Endothelial cell of umbilical vein (primary cell): ENCODE measurements at regions of chr15 and their contacts with region 1.

Region 1: DNA sequence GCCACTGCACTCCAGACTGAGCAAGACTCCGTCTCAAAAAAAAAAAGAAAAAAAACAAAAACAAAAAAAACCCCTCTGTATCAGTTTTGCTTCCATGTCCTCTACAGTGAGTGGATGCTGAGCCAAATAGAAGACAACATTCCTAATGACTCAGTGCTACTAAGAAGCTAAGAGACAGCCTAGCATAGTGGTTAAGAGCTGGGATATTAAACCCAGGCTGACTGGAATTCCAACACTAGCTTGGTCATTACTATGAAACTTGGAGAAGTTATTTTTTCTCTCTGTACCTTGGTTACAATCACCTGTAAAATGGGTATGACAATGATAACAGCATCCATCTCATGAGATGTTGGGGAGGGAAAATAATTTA is 60.9 kb upstream of the PYGO1 start:
- DNase-seq: no peak
- H3K4me3 ChIP-seq: no peak overlapping the region
- H3K27ac ChIP-seq: no peak overlapping the region
- H3K4me1 ChIP-seq: no peaks in the 10 kb centered on the region
- H3K27me3 ChIP-seq: no peaks in the 10 kb centered on the region
- CTCF ChIP-seq: no peak
- POLR2A ChIP-seq: no peak

Region 2: DNA sequence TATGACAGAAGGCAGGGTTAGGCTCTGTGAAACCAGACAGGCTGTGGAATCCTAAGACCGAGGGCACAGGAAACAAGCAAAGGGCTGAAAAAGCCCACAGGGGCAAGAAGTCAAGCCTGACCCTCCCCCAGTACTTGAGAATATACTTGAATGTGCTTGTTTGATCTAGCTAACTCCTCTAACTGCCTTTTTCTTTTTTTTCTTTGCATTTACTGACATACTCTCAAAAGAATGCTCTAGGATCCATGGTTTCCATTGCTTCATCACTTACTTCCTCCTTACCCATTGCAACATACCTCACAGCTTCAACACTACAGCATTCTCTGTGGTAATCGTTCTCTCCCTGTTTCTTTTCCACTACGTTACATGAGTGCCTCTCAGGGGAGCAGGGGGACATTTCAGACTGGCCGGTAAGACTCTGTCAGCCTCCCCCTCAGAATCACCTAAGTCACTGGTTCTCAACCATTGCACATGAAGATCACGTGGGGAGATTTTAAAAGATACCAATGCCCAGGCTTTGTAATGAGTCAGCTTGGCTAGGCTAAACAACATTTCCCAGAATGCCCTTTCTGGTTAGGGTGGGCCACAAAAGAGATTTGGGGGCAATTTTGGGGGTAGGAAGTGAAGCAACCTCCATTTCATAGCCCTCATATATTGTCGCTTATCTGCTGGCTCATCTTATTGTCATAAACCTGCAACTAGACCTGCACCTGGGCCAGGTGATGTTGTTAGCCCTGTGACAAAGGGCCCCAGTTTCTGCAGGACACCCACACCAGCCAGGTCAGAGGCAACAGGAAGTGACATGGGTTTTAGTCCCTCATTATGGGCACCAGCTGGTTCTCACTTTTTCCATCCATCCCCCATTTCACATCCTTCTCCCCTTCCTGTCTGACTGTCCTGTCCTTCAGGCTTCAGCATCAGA is 427.7 kb before region 1 on chr15:
- CTCF ChIA-PET with region 1: no interaction called
- POLR2A ChIA-PET with region 1: no interaction called
- dilution Hi-C with region 1: no loop called
- intact Hi-C with region 1: loop called (anchors 5 kb)
- DNase-seq: peak; percentile 21
- H3K4me3 ChIP-seq: no peak overlapping the region
- H3K27ac ChIP-seq: peak overlapping the region; percentile 12
- H3K4me1 ChIP-seq: peaks cover 5% of the 10 kb centered on the region
- H3K27me3 ChIP-seq: no peaks in the 10 kb centered on the region
- CTCF ChIP-seq: no peak
- POLR2A ChIP-seq: no peak

Region 3: GRCh38 chr15:55526559-55527036 is 122.4 kb before region 1 on chr15:
- CTCF ChIA-PET with region 1: interaction called, 97 read pairs
- POLR2A ChIA-PET with region 1: no interaction called
- dilution Hi-C with region 1: no loop called
- intact Hi-C with region 1: no loop called
- DNase-seq: peak; percentile 31
- H3K4me3 ChIP-seq: no peak overlapping the region
- H3K27ac ChIP-seq: no peak overlapping the region
- H3K4me1 ChIP-seq: no peaks in the 10 kb centered on the region
- H3K27me3 ChIP-seq: peaks cover 9 to 13% of the 10 kb centered on the region in 2 experiments
- CTCF ChIP-seq: peak; percentile 69 to 75
- POLR2A ChIP-seq: no peak

Region 4: GRCh38 chr15:55715355-55716076 is 66.5 kb after region 1 on chr15:
- CTCF ChIA-PET with region 1: no interaction called
- POLR2A ChIA-PET with region 1: no interaction called
- dilution Hi-C with region 1: no loop called
- intact Hi-C with region 1: no loop called
- DNase-seq: no peak
- H3K4me3 ChIP-seq: no peak overlapping the region
- H3K27ac ChIP-seq: no peak overlapping the region
- H3K4me1 ChIP-seq: no peaks in the 10 kb centered on the region
- H3K27me3 ChIP-seq: no peaks in the 10 kb centered on the region
- CTCF ChIP-seq: no peak
- POLR2A ChIP-seq: no peak

Region 5: GRCh38 chr15:55742927-55743728 is 94.1 kb after region 1 on chr15 and contains the start of gene PRTG:
- CTCF ChIA-PET with region 1: interaction called, 10 read pairs
- POLR2A ChIA-PET with region 1: no interaction called
- dilution Hi-C with region 1: no loop called
- intact Hi-C with region 1: loop called (anchors 2 kb)
- DNase-seq: peak; percentile 81
- H3K4me3 ChIP-seq: peak within 1 kb of the TSS; percentile 26 to 98 (median 93)
- H3K27ac ChIP-seq: peak within 1 kb of the TSS; percentile 4
- H3K4me1 ChIP-seq: peaks cover 17% of the 10 kb centered on the region
- H3K27me3 ChIP-seq: no peaks in the 10 kb centered on the region
- CTCF ChIP-seq: no peak
- POLR2A ChIP-seq: peak; percentile 46
- total RNA-seq, gene PRTG: 8.2 and 12.4 TPM in 2 replicates

Region 6: GRCh38 chr15:55799291-55800212 is 150.5 kb after region 1 on chr15:
- CTCF ChIA-PET with region 1: interaction called, 126 read pairs
- POLR2A ChIA-PET with region 1: no interaction called
- dilution Hi-C with region 1: no loop called
- intact Hi-C with region 1: loop called (anchors 1 kb)
- DNase-seq: peak; percentile 69
- H3K4me3 ChIP-seq: no peak overlapping the region
- H3K27ac ChIP-seq: no peak overlapping the region
- H3K4me1 ChIP-seq: no peaks in the 10 kb centered on the region
- H3K27me3 ChIP-seq: peaks cover 5 to 7% of the 10 kb centered on the region in 2 experiments
- CTCF ChIP-seq: peak; percentile 72
- POLR2A ChIP-seq: no peak

Region 7: GRCh38 chr15:55917881-55918296 is 268.9 kb after region 1 on chr15:
- CTCF ChIA-PET with region 1: interaction called, 25 read pairs
- POLR2A ChIA-PET with region 1: no interaction called
- dilution Hi-C with region 1: no loop called
- intact Hi-C with region 1: loop called (anchors 1 kb)
- DNase-seq: peak; percentile 92
- H3K4me3 ChIP-seq: no peak overlapping the region
- H3K27ac ChIP-seq: no peak overlapping the region
- H3K4me1 ChIP-seq: peaks cover 15% of the 10 kb centered on the region
- H3K27me3 ChIP-seq: no peaks in the 10 kb centered on the region
- CTCF ChIP-seq: peak; percentile 39 to 53
- POLR2A ChIP-seq: no peak

Region 8: DNA sequence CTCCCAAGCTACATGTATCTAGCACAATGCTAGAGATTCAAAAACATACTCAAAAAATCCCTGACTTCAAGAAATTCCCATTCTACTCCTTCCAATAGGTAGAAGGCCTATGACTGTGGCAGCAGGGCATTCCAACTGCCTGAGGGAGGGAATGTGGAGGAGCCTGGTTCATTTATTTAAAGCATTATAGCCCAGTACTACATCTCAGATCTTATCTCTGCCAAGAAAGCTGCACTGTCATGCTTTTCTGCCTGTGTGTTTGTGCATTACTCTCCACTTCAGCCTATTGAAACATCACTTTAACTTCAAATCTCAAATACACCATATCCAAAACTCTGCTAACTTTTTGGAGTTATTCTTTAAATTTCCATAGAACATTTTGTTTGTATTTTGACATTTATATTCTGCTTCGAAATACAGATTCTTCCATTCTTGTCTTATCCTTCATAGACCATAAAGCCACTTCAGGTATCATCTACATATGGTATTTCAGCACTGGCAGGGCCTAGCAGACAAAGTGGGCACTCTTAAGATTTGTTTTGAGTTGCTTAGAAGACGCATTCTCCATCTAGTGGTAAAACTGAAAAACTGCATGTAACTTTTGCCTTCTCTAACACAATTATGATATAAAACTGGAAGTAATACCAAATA is 403.5 kb after region 1 on chr15:
- CTCF ChIA-PET with region 1: interaction called, 7 read pairs
- POLR2A ChIA-PET with region 1: no interaction called
- dilution Hi-C with region 1: no loop called
- intact Hi-C with region 1: loop called (anchors 1 kb)
- DNase-seq: peak; percentile 56
- H3K4me3 ChIP-seq: no peak overlapping the region
- H3K27ac ChIP-seq: no peak overlapping the region
- H3K4me1 ChIP-seq: peaks cover 3% of the 10 kb centered on the region
- H3K27me3 ChIP-seq: no peaks in the 10 kb centered on the region
- CTCF ChIP-seq: peak; percentile 40 to 60
- POLR2A ChIP-seq: no peak